ENCODE measurements at regions of chr1 and their contacts with region 1.

Region 1: DNA sequence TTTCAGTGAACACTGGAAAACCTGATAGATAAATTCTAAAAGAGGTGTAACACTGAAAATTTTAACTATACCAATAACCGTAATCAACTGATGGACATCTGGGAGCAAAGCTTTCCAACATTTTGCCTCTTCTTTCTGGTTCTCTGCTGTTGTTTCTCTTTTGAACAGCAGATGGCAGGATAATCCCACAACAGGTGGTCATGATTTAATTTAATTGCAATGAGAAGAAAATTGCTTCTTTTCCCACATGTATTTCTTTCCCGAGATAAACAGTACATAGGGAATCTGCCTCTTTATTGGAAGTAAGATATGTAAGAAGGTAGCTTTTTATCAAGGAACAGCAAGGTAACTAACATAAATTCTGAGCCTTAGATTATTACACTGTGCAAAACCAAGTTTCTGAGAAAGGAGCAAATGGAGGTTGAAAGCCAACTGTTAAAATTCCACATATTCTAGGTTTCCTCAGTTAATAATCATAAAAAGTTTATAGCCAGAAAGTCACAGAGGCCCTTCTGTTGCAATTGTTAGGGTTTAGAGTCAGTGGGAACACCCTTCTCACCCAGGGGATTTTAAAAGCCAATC is 72.9 kb downstream of the RPS6KA1 start:
- DNase-seq: peak; percentile 69
- H3K4me3 ChIP-seq: no peak overlapping the region; a peak in 1 of 4 replicates
- H3K27ac ChIP-seq: no peak overlapping the region
- H3K4me1 ChIP-seq: no peaks in the 10 kb centered on the region; a peak in 1 of 4 replicates
- H3K27me3 ChIP-seq: no peaks in the 10 kb centered on the region
- CTCF ChIP-seq: peak; percentile 87
- EP300 ChIP-seq: no peak
- RAD21 ChIP-seq: peak; percentile 98

Region 2: GRCh38 chr1:26431979-26432695 is 170.3 kb before region 1 on chr1 and contains the start of gene DHDDS:
- CTCF ChIA-PET with region 1: no interaction called
- POLR2A ChIA-PET with region 1: no interaction called
- DNase-seq: peak; percentile 98
- H3K4me3 ChIP-seq: peak within 1 kb of the TSS; percentile 73 to 83
- H3K27ac ChIP-seq: peak within 1 kb of the TSS; percentile 59 to 79; a peak in 3 of 4 replicates
- H3K4me1 ChIP-seq: peaks cover 7 to 8% of the 10 kb centered on the region in 2 experiments; a peak in 2 of 4 replicates
- H3K27me3 ChIP-seq: no peaks in the 10 kb centered on the region
- CTCF ChIP-seq: no peak
- EP300 ChIP-seq: no peak
- RAD21 ChIP-seq: no peak
- polyA plus RNA-seq, gene DHDDS: 25.0 and 36.6 TPM in 2 replicates

Region 3: GRCh38 chr1:26500488-26501175 is 101.8 kb before region 1 on chr1:
- CTCF ChIA-PET with region 1: interaction called, 12 read pairs
- POLR2A ChIA-PET with region 1: no interaction called
- DNase-seq: peak; percentile 97
- H3K4me3 ChIP-seq: peak overlapping the region; percentile 59 to 84
- H3K27ac ChIP-seq: peak overlapping the region; percentile 79 to 81
- H3K4me1 ChIP-seq: no peaks in the 10 kb centered on the region; a peak in 2 of 4 replicates
- H3K27me3 ChIP-seq: no peaks in the 10 kb centered on the region
- CTCF ChIP-seq: no peak; the same call in 1 of the 2 replicates
- EP300 ChIP-seq: no peak
- RAD21 ChIP-seq: no peak

Region 4: DNA sequence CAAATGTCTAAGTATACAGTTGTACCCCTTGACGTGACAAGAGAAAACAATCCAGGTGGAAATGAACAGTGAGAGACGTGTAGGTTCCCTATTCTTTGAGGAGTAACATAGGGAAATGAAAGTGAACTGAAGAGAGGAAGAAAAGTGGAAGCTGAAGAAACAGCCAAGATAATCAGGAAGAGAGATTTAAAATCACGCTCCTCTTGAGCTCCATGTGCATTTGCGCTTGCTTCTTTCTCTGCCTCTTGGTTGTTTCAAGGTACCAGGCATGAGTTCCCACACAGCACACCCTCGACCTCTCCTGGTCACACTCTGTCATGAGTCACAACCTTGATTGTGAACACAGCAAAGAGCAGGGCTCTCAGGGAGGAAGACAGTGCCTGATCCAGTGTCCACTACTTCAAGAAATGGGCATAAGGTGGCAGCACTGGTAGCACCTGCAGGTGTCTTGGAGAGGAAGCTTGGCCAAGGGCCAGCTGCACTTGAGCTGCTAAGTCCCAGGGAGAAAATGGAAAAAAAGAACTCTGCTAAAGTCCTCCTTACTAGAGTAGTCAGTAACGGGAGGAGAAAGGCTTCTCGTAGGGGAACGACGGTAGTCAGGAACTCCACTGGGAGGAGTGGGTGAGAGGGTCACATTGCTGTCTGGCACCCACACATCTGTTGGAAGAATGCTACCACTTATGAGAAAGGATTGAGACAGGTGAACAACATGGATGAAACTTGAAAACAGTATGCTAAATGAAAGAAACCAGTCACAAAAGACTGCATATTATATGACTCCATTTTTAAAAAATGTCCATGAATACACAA is 75.0 kb after region 1 on chr1:
- CTCF ChIA-PET with region 1: interaction called, 13 read pairs
- POLR2A ChIA-PET with region 1: no interaction called
- DNase-seq: peak; percentile 39
- H3K4me3 ChIP-seq: no peak overlapping the region
- H3K27ac ChIP-seq: no peak overlapping the region
- H3K4me1 ChIP-seq: peaks cover 3 to 4% of the 10 kb centered on the region in 2 experiments; a peak in 1 of 4 replicates
- H3K27me3 ChIP-seq: no peaks in the 10 kb centered on the region
- CTCF ChIP-seq: peak; percentile 55
- EP300 ChIP-seq: no peak
- RAD21 ChIP-seq: peak; percentile 55

Region 5: GRCh38 chr1:26723013-26723991 is 120.8 kb after region 1 on chr1:
- CTCF ChIA-PET with region 1: interaction called, 14 read pairs
- POLR2A ChIA-PET with region 1: interaction called, 3 read pairs
- DNase-seq: peak; percentile 86
- H3K4me3 ChIP-seq: peak overlapping the region in 1 of 2 experiments; percentile 6; a peak in 1 of 4 replicates
- H3K27ac ChIP-seq: peak overlapping the region; percentile 81 to 92
- H3K4me1 ChIP-seq: peaks cover 36 to 50% of the 10 kb centered on the region in 2 experiments
- H3K27me3 ChIP-seq: no peaks in the 10 kb centered on the region
- CTCF ChIP-seq: no peak
- EP300 ChIP-seq: peak in 1 of 2 experiments; percentile 70; a peak in 2 of 4 replicates
- RAD21 ChIP-seq: peak; percentile 17; the same call in 1 of the 2 replicates

Region 6: DNA sequence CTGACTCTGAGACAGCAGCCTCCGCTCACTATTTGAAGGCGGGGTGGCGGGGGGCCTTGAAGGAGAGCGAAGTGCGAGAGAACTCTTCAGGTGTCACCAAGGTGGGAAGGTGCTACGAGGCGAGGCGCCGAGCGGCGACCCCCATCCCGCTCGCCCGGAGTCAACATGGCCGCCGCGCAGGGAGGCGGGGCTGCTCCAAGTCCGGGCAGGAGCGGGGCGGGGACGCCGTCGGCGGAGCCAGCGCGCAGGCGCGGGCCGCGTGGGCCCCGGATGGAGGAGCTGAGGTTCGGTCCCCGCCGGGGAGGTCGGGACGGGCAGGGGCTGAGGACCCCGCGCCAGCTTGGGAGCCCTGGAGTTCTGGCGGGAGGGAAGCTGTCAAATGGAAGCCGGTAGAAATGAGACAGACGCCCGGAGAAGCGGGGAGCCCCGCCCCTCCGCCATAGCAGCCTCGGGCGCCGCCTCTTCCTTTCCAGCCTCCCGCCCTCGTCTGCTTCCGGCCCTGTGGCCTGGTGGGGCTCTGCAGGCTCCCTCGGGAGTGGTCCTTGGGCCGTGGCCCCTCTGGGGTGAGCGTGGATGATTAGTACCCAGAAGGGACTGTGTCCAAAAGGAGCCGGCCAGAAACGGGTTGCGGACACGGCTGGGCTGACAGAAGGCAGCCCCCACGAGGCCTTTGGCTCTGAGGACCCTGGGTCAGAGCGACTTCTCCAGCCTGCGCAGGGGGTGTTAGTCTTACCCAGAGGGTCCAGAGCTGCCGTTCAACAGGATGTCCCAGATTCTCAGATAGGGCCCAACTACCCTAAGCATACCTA is 185.4 kb after region 1 on chr1 and contains the start of gene PIGV:
- CTCF ChIA-PET with region 1: interaction called, 311 read pairs
- POLR2A ChIA-PET with region 1: interaction called, 5 read pairs
- DNase-seq: peak; percentile 97
- H3K4me3 ChIP-seq: peak within 1 kb of the TSS; percentile 71 to 88
- H3K27ac ChIP-seq: peak within 1 kb of the TSS; percentile 98 to 99
- H3K4me1 ChIP-seq: peaks cover 29 to 34% of the 10 kb centered on the region in 2 experiments
- H3K27me3 ChIP-seq: no peaks in the 10 kb centered on the region
- CTCF ChIP-seq: no peak
- EP300 ChIP-seq: no peak
- RAD21 ChIP-seq: no peak
- polyA plus RNA-seq, gene PIGV: 16.5 and 26.4 TPM in 2 replicates

Region 7: GRCh38 chr1:26799479-26800142 is 197.1 kb after region 1 on chr1:
- CTCF ChIA-PET with region 1: interaction called, 27 read pairs
- POLR2A ChIA-PET with region 1: no interaction called
- DNase-seq: peak; percentile 32
- H3K4me3 ChIP-seq: peak overlapping the region; percentile 4 to 9; a peak in 1 of 4 replicates
- H3K27ac ChIP-seq: peak overlapping the region; percentile 29 to 68
- H3K4me1 ChIP-seq: peaks cover 11 to 13% of the 10 kb centered on the region in 2 experiments
- H3K27me3 ChIP-seq: no peaks in the 10 kb centered on the region
- CTCF ChIP-seq: no peak
- EP300 ChIP-seq: peak in 1 of 2 experiments; percentile 42; a peak in 1 of 4 replicates
- RAD21 ChIP-seq: no peak

Region 8: GRCh38 chr1:26831546-26832248 is 229.2 kb after region 1 on chr1:
- CTCF ChIA-PET with region 1: interaction called, 15 read pairs
- POLR2A ChIA-PET with region 1: no interaction called
- DNase-seq: no peak
- H3K4me3 ChIP-seq: no peak overlapping the region
- H3K27ac ChIP-seq: no peak overlapping the region
- H3K4me1 ChIP-seq: peaks cover 0 to 16% of the 10 kb centered on the region in 2 experiments; a peak in 1 of 4 replicates
- H3K27me3 ChIP-seq: no peaks in the 10 kb centered on the region
- CTCF ChIP-seq: no peak
- EP300 ChIP-seq: no peak
- RAD21 ChIP-seq: no peak